Left ventricle myocardium inferior (tissue), 1 donor: ENCODE measurements at regions of chr11 and their contacts with region 1.

Region 1: GRCh38 chr11:98185245-98185644 is 835.5 kb upstream of the CNTN5 start:
- DNase-seq: no peak
- H3K4me3 ChIP-seq: no peak overlapping the region
- H3K27ac ChIP-seq: no peak overlapping the region
- H3K4me1 ChIP-seq: no peaks in the 10 kb centered on the region
- H3K27me3 ChIP-seq: no peaks in the 10 kb centered on the region
- CTCF ChIP-seq: no peak

Region 2: DNA sequence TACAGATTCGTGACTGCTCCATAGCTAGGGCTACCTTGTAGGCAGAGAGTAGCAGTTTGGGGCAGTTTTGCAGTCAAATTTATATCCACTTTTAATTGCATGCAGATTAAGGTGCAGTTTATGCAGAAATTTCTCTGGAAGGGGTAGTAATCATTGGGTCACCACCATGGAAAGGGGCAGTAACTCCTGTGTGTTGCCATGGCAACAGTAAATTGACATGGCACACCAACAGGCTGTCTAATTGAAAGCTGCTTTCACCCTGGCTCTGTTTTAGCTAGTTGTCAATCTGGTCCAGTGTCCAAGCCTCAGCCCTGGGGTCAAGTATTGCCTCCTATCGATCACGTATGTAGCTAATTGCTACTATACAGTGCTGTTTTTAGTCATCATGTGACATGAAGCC is 49.4 kb after region 1 on chr11:
- intact Hi-C with region 1: loop called (anchors 5 kb)
- DNase-seq: no peak
- H3K4me3 ChIP-seq: no peak overlapping the region
- H3K27ac ChIP-seq: no peak overlapping the region
- H3K4me1 ChIP-seq: no peaks in the 10 kb centered on the region
- H3K27me3 ChIP-seq: no peaks in the 10 kb centered on the region
- CTCF ChIP-seq: no peak

Region 3: GRCh38 chr11:98365185-98365584 is 179.9 kb after region 1 on chr11:
- intact Hi-C with region 1: no loop called
- DNase-seq: no peak
- H3K4me3 ChIP-seq: no peak overlapping the region
- H3K27ac ChIP-seq: no peak overlapping the region
- H3K4me1 ChIP-seq: no peaks in the 10 kb centered on the region
- H3K27me3 ChIP-seq: no peaks in the 10 kb centered on the region
- CTCF ChIP-seq: no peak